A549 (cell line): ENCODE measurements at regions of chr19 and their contacts with region 1.

Region 1: DNA sequence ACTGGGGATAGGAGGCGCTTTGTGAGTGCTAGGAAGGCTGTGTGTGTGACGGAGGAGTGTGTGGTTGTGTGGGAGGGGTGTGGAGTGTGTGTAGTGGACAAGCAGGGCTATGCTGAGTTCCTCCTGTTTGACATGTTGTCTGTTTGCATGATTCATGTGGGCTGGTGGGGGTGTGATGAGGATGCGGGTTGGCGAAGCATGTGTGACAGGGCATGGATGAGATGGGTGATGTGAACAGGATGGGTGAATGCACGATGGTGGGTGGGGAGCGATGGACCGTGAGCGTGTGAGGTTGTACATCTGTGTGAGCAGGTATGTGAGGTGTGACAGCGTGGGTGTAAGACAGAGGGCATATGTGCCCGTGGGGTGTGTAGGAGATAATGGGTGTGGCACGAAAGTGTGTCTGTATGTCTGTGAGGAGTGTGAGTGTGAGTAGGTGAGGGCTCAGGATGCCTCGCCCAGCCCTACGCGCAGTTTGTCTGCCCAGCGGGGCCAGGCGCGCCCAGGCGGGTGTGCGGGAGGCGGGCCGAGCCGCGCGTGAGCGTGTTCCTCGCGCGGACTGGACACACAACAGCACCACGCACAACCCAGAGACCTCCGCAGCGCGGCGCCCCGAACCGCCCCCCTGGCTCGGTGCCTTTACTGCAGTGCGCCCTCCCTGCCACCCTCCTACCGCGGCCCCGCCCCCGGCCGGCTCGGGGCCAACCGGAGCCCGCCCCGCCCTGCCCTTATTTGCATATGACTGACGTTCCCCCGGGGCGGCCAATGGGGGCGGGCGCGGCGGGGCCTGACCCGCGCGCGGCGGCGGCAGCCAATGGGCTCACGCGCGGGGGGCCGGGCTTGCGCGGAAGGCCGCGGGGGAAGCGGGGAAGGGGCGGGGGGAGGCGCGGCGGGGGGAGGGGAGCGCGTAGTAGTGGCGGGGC is 14.4 kb downstream of the CIC start:
- DNase-seq: peak; percentile 97 to 99
- ATAC-seq: peak; percentile 31 to 56
- H3K4me3 ChIP-seq: peak overlapping the region; percentile 76
- H3K27ac ChIP-seq: peak overlapping the region; percentile 94 to 98
- H3K4me1 ChIP-seq: peaks cover 61% of the 10 kb centered on the region
- CTCF ChIP-seq: 0 out of 3 replicates have a peak, but pooled peaks have one; percentile 5
- EP300 ChIP-seq: no peak
- POLR2A ChIP-seq: peak; percentile 35; the same call in 1 of the 2 replicates
- RAD21 ChIP-seq: no peak

Region 2: DNA sequence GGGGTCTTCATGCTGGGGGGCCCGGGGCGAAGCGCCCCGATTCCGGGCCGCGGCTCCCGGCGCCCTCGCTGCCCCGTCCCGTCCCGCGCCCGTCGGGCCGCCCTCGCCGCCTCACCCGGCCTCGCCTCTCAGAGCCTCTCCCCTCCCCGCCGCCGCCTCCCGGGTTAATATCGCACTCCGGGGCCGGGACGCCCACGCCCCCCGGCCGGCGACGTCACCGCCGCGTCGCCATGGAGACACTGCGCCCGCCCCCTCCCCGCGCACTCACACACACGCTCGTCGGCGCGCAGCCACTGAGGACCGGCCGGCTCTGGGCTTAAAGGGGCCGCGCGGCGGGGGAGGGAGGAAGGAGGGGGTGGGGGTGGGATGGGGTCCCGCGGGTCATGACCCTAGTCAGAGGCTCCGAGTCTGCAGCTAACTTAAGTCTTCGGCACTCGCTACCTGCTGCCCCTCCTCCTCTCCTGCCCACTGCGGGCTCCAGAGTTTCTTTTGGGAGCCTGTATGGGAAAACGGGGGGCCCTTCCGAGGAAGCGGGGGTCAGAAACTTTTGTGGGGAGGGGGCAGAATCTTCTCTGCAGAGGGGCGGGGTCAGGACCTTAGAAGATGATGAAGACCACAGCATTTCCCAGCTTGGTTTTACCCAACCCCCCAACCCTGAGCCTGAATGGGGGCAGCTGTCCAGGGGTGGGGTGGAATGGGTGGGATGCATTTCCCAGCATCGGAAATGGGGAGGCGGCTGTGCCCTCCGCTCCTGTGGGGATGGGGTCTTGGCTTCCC is 28.2 kb before region 1 on chr19 and contains the start of gene ERF:
- CTCF ChIA-PET with region 1: interaction called, 616 read pairs
- POLR2A ChIA-PET with region 1: interaction called, 3 read pairs
- DNase-seq: peak; percentile 96 to 98
- ATAC-seq: peak; percentile 48 to 72
- H3K4me3 ChIP-seq: peak within 1 kb of the TSS; percentile 94
- H3K27ac ChIP-seq: peak within 1 kb of the TSS; percentile 94 to 96
- H3K4me1 ChIP-seq: peaks cover 46% of the 10 kb centered on the region
- CTCF ChIP-seq: no peak
- EP300 ChIP-seq: no peak; a peak in 1 of 5 replicates
- POLR2A ChIP-seq: peak; percentile 96
- RAD21 ChIP-seq: no peak
- polyA plus RNA-seq, gene ERF: 71.9 and 103 TPM in 2 replicates

Region 3: DNA sequence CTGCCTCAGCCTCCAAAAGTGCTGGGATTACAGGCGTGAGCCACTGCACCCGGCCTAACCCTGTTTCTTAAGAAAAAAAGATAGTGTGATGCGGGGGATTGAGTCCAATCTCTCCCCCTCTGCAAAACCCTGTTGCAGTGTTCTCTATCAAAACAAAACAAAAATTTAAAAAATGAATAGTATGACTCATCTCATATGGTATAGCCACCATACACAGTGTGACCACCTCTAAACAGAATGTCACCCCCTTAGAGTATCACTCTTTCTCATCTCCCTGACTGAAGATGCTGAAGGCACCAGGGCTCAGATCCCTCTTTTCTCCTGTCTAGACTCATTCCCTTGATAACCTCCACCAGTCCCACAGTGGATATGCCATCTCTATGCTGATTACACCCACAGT is 21.6 kb before region 1 on chr19:
- CTCF ChIA-PET with region 1: interaction called, 34 read pairs
- POLR2A ChIA-PET with region 1: no interaction called
- DNase-seq: no peak
- ATAC-seq: peak; percentile 30 to 41; a peak in 5 of 6 replicates
- H3K4me3 ChIP-seq: no peak overlapping the region
- H3K27ac ChIP-seq: no peak overlapping the region
- H3K4me1 ChIP-seq: peaks cover 12% of the 10 kb centered on the region
- CTCF ChIP-seq: no peak
- EP300 ChIP-seq: no peak
- POLR2A ChIP-seq: no peak
- RAD21 ChIP-seq: no peak

Region 4: DNA sequence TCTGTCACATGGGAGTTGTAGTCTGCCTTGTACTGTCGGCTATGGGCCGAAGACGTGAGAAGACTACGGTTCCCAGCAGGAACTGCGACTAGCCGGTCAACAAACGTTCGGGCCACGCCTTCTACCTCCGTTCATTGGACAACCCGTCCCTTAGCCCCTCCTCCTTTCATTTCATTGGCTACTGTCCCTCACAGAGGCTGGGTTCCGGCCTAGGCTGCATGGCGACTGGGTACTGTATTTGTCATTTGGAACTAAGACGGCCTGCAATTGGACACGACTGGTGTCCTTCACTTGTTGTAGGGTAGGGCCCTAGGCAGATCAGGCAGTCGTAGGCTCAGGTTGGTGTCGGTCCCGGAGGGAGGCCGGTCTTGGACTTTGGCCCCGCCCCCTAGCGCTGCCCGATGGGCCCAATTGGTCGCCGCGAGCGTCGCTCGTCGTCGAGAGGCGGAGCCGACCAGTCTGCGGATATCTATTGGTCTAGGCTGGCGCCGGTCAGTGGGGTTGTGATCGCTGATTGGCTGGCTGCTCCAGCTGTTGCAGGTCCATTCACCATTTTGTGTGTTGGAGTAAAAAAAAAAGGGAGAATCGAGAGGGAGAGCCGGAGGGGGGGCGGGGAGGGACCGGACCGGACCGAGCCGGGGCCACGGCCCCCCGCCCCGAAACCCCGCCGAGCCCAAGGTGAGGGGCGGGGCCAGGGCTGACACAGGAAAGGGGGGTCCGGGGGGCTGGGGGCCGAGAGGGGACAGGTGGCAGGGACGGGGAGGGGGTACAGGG is 14.5 kb before region 1 on chr19 and contains the start of gene CIC:
- CTCF ChIA-PET with region 1: interaction called, 224 read pairs
- POLR2A ChIA-PET with region 1: interaction called, 13 read pairs
- DNase-seq: peak; percentile 100
- ATAC-seq: peak; percentile 80 to 93
- H3K4me3 ChIP-seq: peak within 1 kb of the TSS; percentile 58
- H3K27ac ChIP-seq: peak within 1 kb of the TSS; percentile 87 to 94
- H3K4me1 ChIP-seq: peaks cover 28% of the 10 kb centered on the region
- CTCF ChIP-seq: no peak
- EP300 ChIP-seq: no peak; a peak in 1 of 5 replicates
- POLR2A ChIP-seq: no peak
- RAD21 ChIP-seq: no peak
- polyA plus RNA-seq, gene CIC: 7.2 and 7.7 TPM in 2 replicates

Region 5: DNA sequence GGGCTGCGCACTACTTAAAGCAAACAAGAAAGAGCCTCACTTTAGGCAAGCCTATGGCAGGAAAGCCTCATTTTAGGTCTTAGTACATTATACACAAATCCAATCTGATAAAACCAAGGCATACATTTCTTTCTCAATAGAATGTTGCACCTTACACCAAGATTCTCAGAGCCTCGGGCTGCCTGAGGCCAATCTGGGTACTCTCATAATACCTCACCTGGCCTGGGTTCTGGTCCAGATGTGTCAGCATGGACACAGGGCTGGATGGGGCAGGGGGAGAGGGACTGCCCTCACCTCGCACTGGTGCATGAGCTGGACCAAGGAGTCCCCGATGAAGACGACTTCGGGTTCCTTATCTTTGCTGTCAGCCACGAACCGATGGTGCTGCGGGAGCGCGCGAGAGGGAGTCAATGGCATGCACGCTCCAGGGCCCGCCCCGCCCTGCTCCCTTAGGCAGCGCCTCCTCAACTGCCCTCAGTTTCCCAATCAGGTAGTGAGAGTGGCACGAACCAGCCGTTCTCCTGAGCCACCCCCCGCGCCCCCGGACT is 18.3 kb after region 1 on chr19 and contains the start of gene PRR19:
- CTCF ChIA-PET with region 1: interaction called, 224 read pairs
- POLR2A ChIA-PET with region 1: interaction called, 13 read pairs
- DNase-seq: no peak
- ATAC-seq: peak; percentile 37 to 63
- H3K4me3 ChIP-seq: peak within 1 kb of the TSS; percentile 65
- H3K27ac ChIP-seq: peak within 1 kb of the TSS; percentile 74 to 85
- H3K4me1 ChIP-seq: peaks cover 19% of the 10 kb centered on the region
- CTCF ChIP-seq: no peak
- EP300 ChIP-seq: no peak
- POLR2A ChIP-seq: no peak
- RAD21 ChIP-seq: no peak
- polyA plus RNA-seq, gene PRR19: 1.1 and 1.3 TPM in 2 replicates